ENCODE measurements at regions of chr5 and their contacts with region 1.

Region 1: DNA sequence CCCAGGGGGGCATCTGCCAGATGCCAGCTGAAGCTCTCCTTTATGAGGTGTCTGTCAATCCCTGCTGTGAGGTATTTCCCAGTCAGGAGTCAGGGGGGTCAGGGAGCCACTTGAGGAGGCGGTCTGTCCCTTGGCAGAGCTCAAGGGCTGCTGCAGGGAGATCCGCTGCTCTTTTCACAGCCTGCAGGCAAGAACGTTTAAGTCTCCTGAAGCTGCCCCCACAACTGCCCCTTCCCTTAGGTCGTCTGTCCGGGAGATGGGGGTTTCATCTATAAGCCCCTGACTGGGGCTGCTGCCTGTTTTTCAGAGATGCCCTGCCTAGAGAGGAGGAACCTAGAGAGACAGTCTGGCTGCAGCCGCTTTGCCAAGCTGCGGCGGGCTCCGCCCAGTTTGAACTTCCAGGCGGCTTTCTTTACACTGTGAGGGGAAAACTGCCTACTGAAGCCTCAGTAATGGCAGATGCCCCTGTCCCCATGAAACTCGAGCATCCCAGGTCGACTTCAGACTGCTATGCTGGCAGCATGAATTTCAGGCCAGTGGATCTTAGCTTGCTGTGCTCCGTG is 148.3 kb downstream of the RPS23 start:
- DNase-seq: no peak
- ATAC-seq: no peak
- H3K4me3 ChIP-seq: no peak overlapping the region
- H3K4me3 Mint-ChIP-seq: no peak overlapping the region
- H3K27ac ChIP-seq: no peak overlapping the region
- H3K27ac Mint-ChIP-seq: no peak overlapping the region
- H3K4me1 ChIP-seq: no peaks in the 10 kb centered on the region
- H3K4me1 Mint-ChIP-seq: no peaks in the 10 kb centered on the region
- H3K27me3 ChIP-seq: no peaks in the 10 kb centered on the region
- H3K27me3 Mint-ChIP-seq: no peaks in the 10 kb centered on the region
- CTCF ChIP-seq: no peak

Region 2: GRCh38 chr5:82147865-82148573 is 18.2 kb after region 1 on chr5:
- CTCF ChIA-PET with region 1: no interaction called
- POLR2A ChIA-PET with region 1: no interaction called
- intact Hi-C with region 1: no loop called
- DNase-seq: no peak
- ATAC-seq: no peak
- H3K4me3 ChIP-seq: no peak overlapping the region
- H3K4me3 Mint-ChIP-seq: no peak overlapping the region
- H3K27ac ChIP-seq: no peak overlapping the region
- H3K27ac Mint-ChIP-seq: no peak overlapping the region
- H3K4me1 ChIP-seq: no peaks in the 10 kb centered on the region
- H3K4me1 Mint-ChIP-seq: no peaks in the 10 kb centered on the region
- H3K27me3 ChIP-seq: no peaks in the 10 kb centered on the region
- H3K27me3 Mint-ChIP-seq: no peaks in the 10 kb centered on the region
- CTCF ChIP-seq: no peak

Region 3: DNA sequence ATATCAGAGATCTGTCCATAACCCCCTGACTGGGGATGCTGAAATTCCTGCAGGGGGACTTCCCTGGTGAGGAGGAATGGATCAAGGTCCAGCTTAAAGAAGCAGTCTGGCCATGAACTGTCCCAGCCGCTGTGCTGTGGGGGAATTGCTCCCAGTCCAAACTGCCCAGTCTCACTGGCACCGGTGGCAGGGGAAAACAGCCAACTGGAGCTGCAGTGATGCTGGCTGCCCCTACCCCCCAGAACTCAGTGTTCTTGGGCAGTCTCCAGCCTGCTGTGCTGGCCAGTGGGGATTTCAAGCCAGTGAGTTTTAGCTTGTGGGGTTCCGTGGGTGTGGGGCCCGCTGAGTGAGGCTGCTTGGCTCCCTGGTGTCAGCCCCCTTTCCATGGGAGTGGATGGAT is 454.8 kb after region 1 on chr5:
- CTCF ChIA-PET with region 1: no interaction called
- POLR2A ChIA-PET with region 1: no interaction called
- intact Hi-C with region 1: loop called (anchors 10 kb)
- DNase-seq: no peak
- ATAC-seq: no peak
- H3K4me3 ChIP-seq: no peak overlapping the region
- H3K4me3 Mint-ChIP-seq: no peak overlapping the region
- H3K27ac ChIP-seq: no peak overlapping the region
- H3K27ac Mint-ChIP-seq: no peak overlapping the region
- H3K4me1 ChIP-seq: no peaks in the 10 kb centered on the region
- H3K4me1 Mint-ChIP-seq: no peaks in the 10 kb centered on the region
- H3K27me3 ChIP-seq: no peaks in the 10 kb centered on the region
- H3K27me3 Mint-ChIP-seq: no peaks in the 10 kb centered on the region
- CTCF ChIP-seq: no peak